PC-3 (cell line): ENCODE measurements at regions of chr6 and their contacts with region 1.

Region 1: DNA sequence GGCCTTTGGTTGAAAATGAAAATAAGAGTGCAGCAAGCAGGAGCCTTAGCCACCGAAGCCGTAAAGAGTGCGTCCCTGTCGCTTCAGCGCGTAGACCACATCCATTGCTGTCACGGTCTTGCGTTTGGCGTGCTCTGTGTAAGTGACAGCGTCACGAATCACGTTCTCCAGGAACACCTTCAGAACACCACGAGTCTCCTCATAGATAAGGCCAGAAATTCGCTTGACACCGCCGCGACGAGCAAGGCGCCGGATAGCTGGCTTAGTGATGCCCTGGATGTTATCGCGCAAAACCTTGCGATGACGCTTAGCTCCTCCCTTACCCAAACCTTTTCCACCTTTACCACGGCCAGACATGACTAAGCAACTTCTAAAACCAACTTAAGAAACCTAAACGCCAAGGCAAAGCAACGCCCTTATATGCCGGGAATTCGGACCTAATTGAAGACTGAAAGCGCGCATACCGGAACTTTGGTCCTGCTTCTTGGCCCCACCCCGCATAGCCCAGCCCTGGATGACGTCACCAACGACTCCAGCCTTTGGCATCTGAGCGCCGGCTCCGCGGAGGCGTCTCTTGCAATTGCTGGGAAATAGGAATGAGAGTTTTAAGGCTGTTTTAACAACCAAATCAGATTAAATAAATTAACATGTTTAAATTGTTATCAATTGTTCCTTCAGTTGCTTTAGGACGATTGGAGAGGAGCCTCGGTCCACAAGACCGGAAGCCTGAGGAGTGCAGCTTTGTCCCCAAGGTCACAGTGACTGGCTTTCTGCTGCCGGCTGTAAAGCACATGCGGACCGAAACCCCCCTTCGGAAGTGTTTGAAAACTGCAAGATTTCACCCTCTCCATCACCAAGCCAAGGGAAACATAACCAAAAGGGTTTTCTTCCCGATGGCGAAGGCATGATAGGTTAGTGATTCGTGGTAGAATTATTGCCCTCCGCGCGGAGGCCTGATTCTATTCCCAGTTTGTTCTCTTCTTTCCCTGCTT is 79.6 kb upstream of the BTN3A2 start:
- DNase-seq: peak; percentile 100
- ATAC-seq: peak; percentile 77
- H3K4me3 ChIP-seq: peak overlapping the region; percentile 92
- H3K27ac ChIP-seq: peak overlapping the region; percentile 94
- H3K4me1 ChIP-seq: peaks cover 19% of the 10 kb centered on the region
- H3K27me3 ChIP-seq: no peaks in the 10 kb centered on the region
- CTCF ChIP-seq: no peak

Region 2: DNA sequence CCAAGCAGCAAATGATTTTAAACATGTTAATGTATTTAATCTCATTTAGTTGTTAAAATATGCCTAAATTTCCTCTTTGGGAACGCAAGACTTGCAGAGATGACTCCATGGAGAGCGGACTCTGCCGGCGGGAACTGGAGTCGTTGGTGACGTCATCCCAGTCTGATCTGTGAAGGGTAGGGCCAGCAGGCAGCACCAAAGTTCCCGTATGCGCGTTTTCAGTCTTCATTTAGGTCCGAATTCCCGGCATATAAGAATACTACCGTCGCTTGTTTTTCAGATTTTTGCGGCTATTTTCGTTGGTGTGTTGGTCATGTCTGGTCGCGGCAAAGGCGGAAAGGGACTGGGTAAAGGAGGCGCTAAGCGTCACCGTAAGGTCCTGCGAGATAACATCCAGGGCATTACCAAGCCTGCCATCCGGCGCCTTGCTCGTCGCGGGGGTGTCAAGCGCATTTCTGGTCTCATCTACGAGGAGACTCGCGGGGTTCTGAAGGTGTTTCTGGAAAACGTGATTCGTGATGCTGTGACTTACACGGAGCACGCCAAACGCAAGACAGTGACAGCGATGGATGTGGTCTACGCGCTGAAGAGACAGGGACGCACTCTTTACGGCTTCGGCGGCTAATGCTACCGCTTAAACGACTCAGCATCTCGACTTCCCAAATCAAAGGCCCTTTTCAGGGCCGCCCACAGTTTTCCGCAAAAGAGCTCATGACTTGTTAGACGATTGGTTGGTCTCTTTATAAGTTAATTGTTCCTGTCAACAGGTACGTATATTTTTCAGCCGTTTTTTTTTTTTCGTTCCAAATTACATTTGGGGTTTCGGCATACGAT is 80.9 kb before region 1 on chr6:
- CTCF ChIA-PET with region 1: interaction called, 3 read pairs
- POLR2A ChIA-PET with region 1: interaction called, 8 read pairs
- intact Hi-C with region 1: loop called (anchors 2 kb)
- DNase-seq: peak; percentile 98
- ATAC-seq: peak; percentile 59
- H3K4me3 ChIP-seq: peak overlapping the region; percentile 85
- H3K27ac ChIP-seq: peak overlapping the region; percentile 82
- H3K4me1 ChIP-seq: peaks cover 15% of the 10 kb centered on the region
- H3K27me3 ChIP-seq: no peaks in the 10 kb centered on the region
- CTCF ChIP-seq: peak; percentile 44

Region 3: DNA sequence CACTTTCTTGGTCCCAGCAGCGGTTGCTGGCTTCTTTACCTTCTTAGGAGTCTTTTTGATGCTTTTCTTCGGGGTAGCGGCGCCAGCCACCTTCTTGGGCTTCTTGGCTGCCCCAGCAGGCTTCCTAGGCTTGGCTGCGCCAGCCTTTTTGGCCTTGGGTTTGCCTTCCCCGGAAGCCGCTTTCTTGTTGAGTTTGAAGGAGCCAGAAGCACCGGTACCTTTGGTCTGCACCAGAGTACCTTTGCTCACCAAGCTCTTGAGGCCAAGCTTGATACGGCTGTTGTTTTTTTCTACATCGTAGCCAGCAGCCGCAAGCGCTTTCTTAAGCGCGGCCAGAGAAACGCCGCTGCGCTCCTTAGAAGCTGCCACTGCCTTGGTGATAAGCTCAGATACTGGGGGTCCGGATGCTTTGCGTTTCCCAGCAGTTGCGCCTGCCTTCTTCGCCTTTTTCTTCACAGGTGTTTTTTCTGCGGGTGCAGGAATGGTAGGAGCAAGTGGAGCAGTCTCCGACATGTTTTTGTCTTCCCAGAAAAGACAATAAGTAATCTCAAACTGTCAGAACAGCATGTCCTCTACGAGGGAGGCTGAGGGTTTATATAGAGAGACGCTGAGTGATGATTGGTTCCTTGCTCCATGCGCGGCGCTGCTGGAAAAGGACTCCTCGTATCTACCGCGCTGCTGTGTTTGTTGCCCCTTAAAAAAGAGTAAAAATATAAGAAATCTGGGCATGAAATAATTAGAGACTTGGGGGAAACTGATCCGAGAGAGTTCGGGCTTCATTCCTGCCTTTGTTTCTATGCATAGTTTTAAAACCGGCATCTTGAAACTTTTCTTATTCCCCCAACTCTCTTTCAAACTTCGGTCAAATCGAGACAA is 50.8 kb before region 1 on chr6:
- CTCF ChIA-PET with region 1: no interaction called
- POLR2A ChIA-PET with region 1: interaction called, 17 read pairs
- intact Hi-C with region 1: loop called (anchors 1 kb)
- DNase-seq: peak; percentile 97
- ATAC-seq: peak; percentile 69
- H3K4me3 ChIP-seq: peak overlapping the region; percentile 68
- H3K27ac ChIP-seq: peak overlapping the region; percentile 79
- H3K4me1 ChIP-seq: peaks cover 40% of the 10 kb centered on the region
- H3K27me3 ChIP-seq: no peaks in the 10 kb centered on the region
- CTCF ChIP-seq: no peak

Region 4: DNA sequence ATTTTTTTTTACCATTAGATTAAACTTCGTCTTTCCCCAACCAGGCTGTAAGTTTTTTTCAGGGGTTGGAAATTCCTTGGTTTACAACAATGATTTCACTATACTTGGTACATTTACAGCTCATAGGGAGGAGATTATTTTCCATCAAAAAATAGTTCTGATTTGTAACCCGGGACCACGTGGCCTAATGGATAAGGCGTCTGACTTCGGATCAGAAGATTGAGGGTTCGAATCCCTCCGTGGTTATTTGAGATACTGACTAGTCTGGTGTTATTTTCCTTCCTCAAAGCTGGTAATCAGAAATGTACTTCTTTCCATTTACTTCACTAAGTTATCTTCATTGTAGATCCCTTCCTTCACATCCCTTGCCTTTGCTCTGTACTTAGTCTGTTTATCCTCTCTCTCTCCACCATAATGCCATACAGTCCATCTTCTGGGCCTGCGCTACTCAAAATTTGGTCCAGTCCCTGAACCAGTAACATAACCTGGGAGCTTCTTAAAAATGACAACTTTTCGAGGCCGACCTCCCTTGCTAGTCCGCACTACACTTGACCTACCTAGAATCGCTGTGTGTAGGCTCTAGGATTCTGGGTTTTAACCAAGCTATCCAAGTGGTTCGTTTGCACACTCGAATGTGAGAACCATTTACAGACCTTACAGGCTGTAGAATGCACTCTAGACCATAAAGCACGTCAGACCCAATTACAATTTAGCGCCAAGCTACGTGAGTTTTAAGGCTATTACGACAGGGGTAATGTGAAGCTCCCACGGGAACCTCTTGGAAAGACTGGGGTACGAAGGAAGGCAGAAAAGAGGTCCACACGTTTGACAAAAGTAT is 37.4 kb after region 1 on chr6:
- CTCF ChIA-PET with region 1: no interaction called
- POLR2A ChIA-PET with region 1: no interaction called
- intact Hi-C with region 1: no loop called
- DNase-seq: peak; percentile 96
- ATAC-seq: peak; percentile 79
- H3K4me3 ChIP-seq: peak overlapping the region; percentile 79
- H3K27ac ChIP-seq: peak overlapping the region; percentile 38; the same call in 1 of the 2 replicates
- H3K4me1 ChIP-seq: peaks cover 8% of the 10 kb centered on the region; the same call in 1 of the 2 replicates
- H3K27me3 ChIP-seq: no peaks in the 10 kb centered on the region
- CTCF ChIP-seq: no peak